Right ventricle myocardium inferior (tissue), 1 donor: ENCODE measurements at regions of chr7 and their contacts with region 1.

Region 1: DNA sequence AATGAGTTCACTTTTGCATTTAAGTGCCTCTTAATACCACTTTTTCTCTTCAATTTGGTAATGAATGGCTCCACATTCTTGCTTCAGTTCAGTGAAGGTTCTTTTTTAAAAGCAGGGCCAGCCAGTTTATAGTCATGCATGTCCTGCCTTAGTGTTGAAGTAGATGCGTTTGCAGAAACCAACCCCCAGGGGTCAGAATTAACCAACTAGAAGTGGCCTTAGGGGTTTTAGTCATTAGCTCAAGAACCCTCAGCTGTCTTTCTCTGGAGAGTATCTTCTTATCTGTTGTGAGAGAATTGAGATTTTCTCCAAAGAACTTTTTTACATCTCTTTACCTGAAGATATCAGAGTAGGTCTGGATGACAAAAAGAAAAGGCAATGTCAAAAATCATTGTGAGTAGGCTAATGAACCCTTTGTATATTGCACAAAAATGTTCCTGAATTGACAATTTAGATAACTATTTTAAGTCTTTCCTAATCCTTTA is 82.2 kb downstream of the PIK3CG start:
- DNase-seq: no peak
- ATAC-seq: peak; percentile 89

Region 2: GRCh38 chr7:106793015-106793975 is 154.0 kb before region 1 on chr7:
- intact Hi-C with region 1: loop called (anchors 1 kb)
- DNase-seq: no peak
- ATAC-seq: no peak

Region 3: DNA sequence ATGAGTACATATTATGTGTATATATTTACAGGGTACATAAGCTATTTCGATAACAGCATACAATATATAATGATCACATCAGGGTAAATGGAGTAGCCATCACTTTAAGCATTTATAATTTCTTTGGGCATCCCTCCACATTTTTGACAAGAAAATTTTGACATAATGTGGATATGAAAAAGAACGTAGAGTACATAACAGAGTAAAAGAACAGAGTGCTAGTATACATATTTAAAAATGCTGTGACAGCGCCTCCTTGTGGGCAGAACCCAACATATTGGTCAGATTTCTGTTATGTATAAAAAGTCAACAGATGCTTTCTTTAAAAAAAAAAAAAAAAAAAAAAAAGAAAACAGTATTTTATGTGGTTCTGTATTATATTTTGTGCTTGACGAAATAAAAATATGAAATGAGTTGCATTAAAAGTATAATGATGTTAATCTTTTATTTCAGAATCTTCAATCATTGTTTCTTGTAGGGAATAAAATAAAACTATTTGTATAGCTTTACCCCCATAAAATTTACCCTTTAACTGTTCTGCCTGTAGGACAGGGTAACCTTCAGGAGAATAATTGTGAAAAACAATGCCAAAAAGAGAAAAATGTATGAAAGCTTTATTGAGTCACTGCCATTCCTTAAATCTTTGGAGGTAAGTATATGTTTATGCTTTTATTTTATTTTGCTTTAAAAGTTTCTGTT is 203.2 kb after region 1 on chr7:
- intact Hi-C with region 1: loop called (anchors 1 kb)
- DNase-seq: peak; percentile 74
- ATAC-seq: peak; percentile 69